CD4-positive, alpha-beta memory T cell (primary cell): ENCODE measurements at regions of chr10 and their contacts with region 1.

Region 1: GRCh38 chr10:71696628-71697326 is 22.8 kb downstream of the C10orf105 start:
- DNase-seq: peak; percentile 54 to 60 (median 56)
- H3K4me3 ChIP-seq: no peak overlapping the region
- H3K4me3 Mint-ChIP-seq: peak overlapping the region in 1 of 8 donors; percentile 10
- H3K27ac ChIP-seq: no peak overlapping the region
- H3K27ac Mint-ChIP-seq: peak overlapping the region in 3 of 7 donors; percentile 24 to 57 (median 46)
- H3K4me1 ChIP-seq: peaks cover 51% of the 10 kb centered on the region
- H3K4me1 Mint-ChIP-seq: peaks cover 23 to 60% (median 35%) of the 10 kb centered on the region in 4 donors
- H3K27me3 ChIP-seq: no peaks in the 10 kb centered on the region
- H3K27me3 Mint-ChIP-seq: no peaks in the 10 kb centered on the region

Region 2: GRCh38 chr10:70832852-70833528 is 863.8 kb before region 1 on chr10:
- CTCF ChIA-PET with region 1: no interaction called
- POLR2A ChIA-PET with region 1: no interaction called
- intact Hi-C with region 1: no loop called
- DNase-seq: no peak
- H3K4me3 ChIP-seq: no peak overlapping the region
- H3K4me3 Mint-ChIP-seq: no peak overlapping the region
- H3K27ac ChIP-seq: no peak overlapping the region
- H3K27ac Mint-ChIP-seq: peak overlapping the region in 3 of 7 donors; percentile 2 to 52 (median 20)
- H3K4me1 ChIP-seq: no peaks in the 10 kb centered on the region
- H3K4me1 Mint-ChIP-seq: peaks cover 15 to 26% (median 17%) of the 10 kb centered on the region in 4 donors
- H3K27me3 ChIP-seq: no peaks in the 10 kb centered on the region
- H3K27me3 Mint-ChIP-seq: no peaks in the 10 kb centered on the region

Region 3: DNA sequence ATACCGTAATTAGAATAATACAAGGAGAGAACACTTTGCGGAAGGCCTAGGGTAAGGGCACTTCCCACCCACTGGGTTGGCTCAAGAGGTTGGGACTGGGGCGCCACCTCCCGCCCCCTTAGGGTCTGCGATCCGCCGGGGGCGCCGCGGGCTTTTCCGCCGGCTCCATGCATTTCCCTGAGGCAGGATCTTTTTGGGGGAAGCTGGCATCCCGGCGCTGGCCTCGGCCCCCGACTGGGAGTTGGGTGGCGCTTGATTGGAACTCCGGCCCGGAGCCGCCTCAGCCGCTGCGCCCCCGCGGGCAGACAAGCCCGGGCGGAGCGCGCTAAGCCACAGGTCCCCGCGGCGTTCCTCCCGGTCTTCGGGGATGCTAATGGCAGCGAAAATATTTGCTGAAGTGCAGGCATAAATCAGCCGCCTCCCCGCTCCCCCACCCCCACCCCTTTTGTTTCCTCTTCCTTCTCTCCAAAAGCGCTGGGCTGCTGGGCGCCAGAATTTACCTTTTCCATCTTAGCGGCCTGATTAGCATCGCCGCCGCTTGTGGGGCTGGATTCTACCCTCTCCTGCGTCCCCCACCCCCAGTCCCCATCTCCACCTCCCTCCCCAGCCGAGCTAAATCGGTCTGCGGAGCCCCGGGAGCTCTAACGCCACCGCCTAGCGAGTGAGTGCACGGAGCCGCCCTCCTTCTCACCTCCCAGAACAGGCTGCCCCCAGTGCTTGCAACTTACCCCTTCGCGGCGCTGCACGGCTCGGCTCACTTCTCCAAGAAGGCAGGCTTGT is 479.3 kb before region 1 on chr10:
- CTCF ChIA-PET with region 1: no interaction called
- POLR2A ChIA-PET with region 1: no interaction called
- intact Hi-C with region 1: no loop called
- DNase-seq: no peak
- H3K4me3 ChIP-seq: no peak overlapping the region
- H3K4me3 Mint-ChIP-seq: peak overlapping the region in 7 of 8 donors; percentile 49 to 61 (median 57)
- H3K27ac ChIP-seq: no peak overlapping the region
- H3K27ac Mint-ChIP-seq: no peak overlapping the region
- H3K4me1 ChIP-seq: peaks cover 7% of the 10 kb centered on the region
- H3K4me1 Mint-ChIP-seq: peaks cover 2 to 17% (median 9%) of the 10 kb centered on the region in 4 donors
- H3K27me3 ChIP-seq: peaks cover 7% of the 10 kb centered on the region
- H3K27me3 Mint-ChIP-seq: peaks cover 29 to 50% of the 10 kb centered on the region in 2 donors

Region 4: DNA sequence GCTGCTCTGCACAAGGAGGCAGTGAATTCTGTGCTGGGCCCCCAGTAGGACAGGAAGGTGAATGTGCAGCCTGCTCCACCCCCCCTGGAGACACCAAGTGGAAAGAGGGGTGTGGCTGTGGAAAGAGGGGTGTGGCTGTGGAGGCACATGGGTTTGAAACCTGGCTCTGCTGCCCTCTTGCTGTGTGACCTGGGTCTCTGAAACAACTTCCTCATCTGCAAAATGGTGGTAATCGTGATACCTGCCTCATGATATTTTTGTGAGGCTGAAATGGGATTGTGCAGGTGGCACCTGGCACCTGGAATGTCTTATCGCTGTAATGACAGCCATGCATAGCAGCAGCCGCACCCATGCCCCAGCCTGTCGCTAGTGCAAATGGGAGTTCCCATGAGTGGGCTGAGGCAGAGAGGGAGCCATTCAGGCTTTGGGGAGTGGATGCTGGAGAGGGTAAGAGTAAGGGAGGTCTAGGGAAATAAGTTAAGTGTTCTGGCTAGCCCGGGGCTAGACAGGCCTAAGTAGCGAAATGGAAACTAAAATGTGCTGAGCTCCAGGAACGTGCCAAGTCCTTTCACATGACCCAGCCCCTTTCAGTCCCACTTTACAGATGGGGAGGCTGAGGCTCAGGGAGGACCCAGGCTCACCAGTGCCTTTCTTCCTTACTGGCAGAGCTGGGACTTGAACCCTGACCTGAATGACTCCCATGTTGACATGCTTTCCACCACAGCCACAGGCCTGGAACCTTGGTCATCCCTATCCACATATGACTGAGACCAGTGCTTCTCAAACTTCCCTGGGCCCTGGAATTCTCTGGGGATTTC is 12.2 kb before region 1 on chr10:
- CTCF ChIA-PET with region 1: interaction called, 30 read pairs
- POLR2A ChIA-PET with region 1: no interaction called
- intact Hi-C with region 1: no loop called
- DNase-seq: peak in 1 of 5 donors; percentile 3
- H3K4me3 ChIP-seq: no peak overlapping the region
- H3K4me3 Mint-ChIP-seq: no peak overlapping the region
- H3K27ac ChIP-seq: no peak overlapping the region
- H3K27ac Mint-ChIP-seq: no peak overlapping the region
- H3K4me1 ChIP-seq: no peaks in the 10 kb centered on the region
- H3K4me1 Mint-ChIP-seq: peaks cover 0 to 3% (median 0%) of the 10 kb centered on the region in 4 donors
- H3K27me3 ChIP-seq: no peaks in the 10 kb centered on the region
- H3K27me3 Mint-ChIP-seq: peaks cover 0 to 1% of the 10 kb centered on the region in 2 donors

Region 5: DNA sequence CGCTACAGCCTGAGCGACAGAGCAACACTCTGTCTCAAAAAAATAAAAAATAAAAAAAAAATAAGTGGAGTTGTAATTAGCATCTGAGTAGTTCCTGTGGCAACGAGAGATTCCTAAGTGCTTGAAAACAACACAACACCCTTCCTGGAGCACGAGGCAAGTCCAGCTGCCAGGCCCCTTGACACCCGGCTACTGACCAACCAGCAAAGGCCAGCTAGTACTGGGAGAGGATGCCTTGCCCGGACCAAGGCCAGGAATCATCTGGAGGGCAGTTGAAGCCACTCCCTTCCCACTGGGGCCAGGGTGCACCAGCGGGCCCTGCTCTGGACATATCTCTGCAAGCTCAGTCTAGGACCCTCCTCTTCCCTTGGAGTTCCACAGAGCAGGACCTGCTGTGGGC is 22.3 kb after region 1 on chr10:
- CTCF ChIA-PET with region 1: interaction called, 38 read pairs
- POLR2A ChIA-PET with region 1: interaction called, 6 read pairs
- intact Hi-C with region 1: no loop called
- DNase-seq: no peak
- H3K4me3 ChIP-seq: no peak overlapping the region
- H3K4me3 Mint-ChIP-seq: no peak overlapping the region
- H3K27ac ChIP-seq: no peak overlapping the region
- H3K27ac Mint-ChIP-seq: peak overlapping the region in 2 of 7 donors; percentile 41 to 79
- H3K4me1 ChIP-seq: peaks cover 74% of the 10 kb centered on the region
- H3K4me1 Mint-ChIP-seq: peaks cover 27 to 79% (median 47%) of the 10 kb centered on the region in 4 donors
- H3K27me3 ChIP-seq: no peaks in the 10 kb centered on the region
- H3K27me3 Mint-ChIP-seq: no peaks in the 10 kb centered on the region

Region 6: GRCh38 chr10:71756311-71757191 is 59.8 kb after region 1 on chr10:
- CTCF ChIA-PET with region 1: interaction called, 379 read pairs
- POLR2A ChIA-PET with region 1: interaction called, 4 read pairs
- intact Hi-C with region 1: no loop called
- DNase-seq: peak; percentile 5 to 76 (median 73)
- H3K4me3 ChIP-seq: peak overlapping the region in 1 of 2 donors; percentile 35
- H3K4me3 Mint-ChIP-seq: peak overlapping the region; percentile 54 to 87 (median 76)
- H3K27ac ChIP-seq: peak overlapping the region; percentile 53
- H3K27ac Mint-ChIP-seq: peak overlapping the region; percentile 95 to 99 (median 96)
- H3K4me1 ChIP-seq: peaks cover 94% of the 10 kb centered on the region
- H3K4me1 Mint-ChIP-seq: peaks cover 68 to 100% (median 83%) of the 10 kb centered on the region in 4 donors
- H3K27me3 ChIP-seq: no peaks in the 10 kb centered on the region
- H3K27me3 Mint-ChIP-seq: no peaks in the 10 kb centered on the region

Region 7: GRCh38 chr10:71782917-71783490 is 86.2 kb after region 1 on chr10:
- CTCF ChIA-PET with region 1: interaction called, 10 read pairs
- POLR2A ChIA-PET with region 1: no interaction called
- intact Hi-C with region 1: no loop called
- DNase-seq: no peak
- H3K4me3 ChIP-seq: no peak overlapping the region
- H3K4me3 Mint-ChIP-seq: peak overlapping the region in 1 of 8 donors; percentile 53
- H3K27ac ChIP-seq: no peak overlapping the region
- H3K27ac Mint-ChIP-seq: no peak overlapping the region
- H3K4me1 ChIP-seq: no peaks in the 10 kb centered on the region
- H3K4me1 Mint-ChIP-seq: peaks cover 0 to 4% (median 0%) of the 10 kb centered on the region in 4 donors
- H3K27me3 ChIP-seq: no peaks in the 10 kb centered on the region
- H3K27me3 Mint-ChIP-seq: peaks cover 0 to 2% of the 10 kb centered on the region in 2 donors